B cell (primary cell): ENCODE measurements at regions of chr9 and their contacts with region 1.

Region 1: GRCh38 chr9:128322404-128323211 is at the starts of genes COQ4 and TRUB2:
- DNase-seq: peak; percentile 97
- ATAC-seq: peak; percentile 85
- H3K4me3 ChIP-seq: peak within 1 kb of the TSS; percentile 61 to 95 (median 92)
- H3K4me3 Mint-ChIP-seq: peak within 1 kb of the TSS; percentile 97
- H3K27ac ChIP-seq: peak within 1 kb of the TSS; percentile 75 to 78
- H3K27ac Mint-ChIP-seq: peak within 1 kb of the TSS; percentile 98
- H3K4me1 ChIP-seq: peaks cover 17 to 22% of the 10 kb centered on the region in 2 donors
- H3K4me1 Mint-ChIP-seq: peaks cover 31% of the 10 kb centered on the region
- H3K27me3 ChIP-seq: no peaks in the 10 kb centered on the region
- H3K27me3 Mint-ChIP-seq: no peaks in the 10 kb centered on the region
- CTCF ChIP-seq: no peak
- total RNA-seq, gene COQ4: 54.9 and 57.3 TPM in 2 replicates
- total RNA-seq, gene TRUB2: 21.4 and 21.5 TPM in 2 replicates

Region 2: GRCh38 chr9:128191406-128192046 is 131.1 kb before region 1 on chr9 and contains the start of gene CIZ1:
- CTCF ChIA-PET with region 1: no interaction called
- POLR2A ChIA-PET with region 1: no interaction called
- intact Hi-C with region 1: loop called (anchors 5 kb)
- DNase-seq: peak; percentile 88
- ATAC-seq: peak; percentile 90
- H3K4me3 ChIP-seq: peak within 1 kb of the TSS; percentile 26 to 82 (median 73)
- H3K4me3 Mint-ChIP-seq: peak within 1 kb of the TSS; percentile 94
- H3K27ac ChIP-seq: peak within 1 kb of the TSS; percentile 44 to 76
- H3K27ac Mint-ChIP-seq: peak within 1 kb of the TSS; percentile 92
- H3K4me1 ChIP-seq: peaks cover 12 to 24% of the 10 kb centered on the region in 2 donors
- H3K4me1 Mint-ChIP-seq: peaks cover 29% of the 10 kb centered on the region
- H3K27me3 ChIP-seq: no peaks in the 10 kb centered on the region
- H3K27me3 Mint-ChIP-seq: no peaks in the 10 kb centered on the region
- CTCF ChIP-seq: peak; percentile 84
- total RNA-seq, gene CIZ1: 160 and 169 TPM in 2 replicates

Region 3: DNA sequence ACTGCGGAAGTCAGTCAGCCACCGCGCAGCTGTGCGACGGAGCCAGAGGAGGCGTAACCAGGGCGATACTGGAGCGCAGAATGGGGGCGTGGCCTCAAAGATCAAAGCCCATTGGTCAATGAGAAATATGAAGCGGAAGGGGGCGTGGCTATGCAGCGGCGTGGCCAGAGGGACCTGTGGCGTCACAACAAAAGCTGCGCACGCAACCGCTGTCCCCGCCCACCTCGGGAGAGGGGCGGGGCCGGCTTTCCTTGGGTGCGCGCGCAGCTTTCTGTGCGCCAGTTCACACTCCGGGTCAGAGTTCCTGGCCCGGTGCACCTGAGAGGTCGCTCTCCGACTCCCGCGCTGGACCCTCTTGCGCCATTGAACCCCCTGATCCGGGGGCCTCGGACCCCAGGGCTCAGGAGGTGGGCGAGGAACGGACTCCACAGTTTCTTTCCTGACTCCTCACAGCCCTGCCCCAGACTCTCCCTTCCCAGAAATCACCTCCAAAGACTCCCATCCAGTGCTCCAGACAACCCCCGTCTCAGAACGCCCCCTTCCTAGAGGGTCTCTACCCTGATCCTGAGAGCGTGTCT is 46.5 kb before region 1 on chr9 and contains the starts of genes GOLGA2 and SWI5:
- CTCF ChIA-PET with region 1: no interaction called
- POLR2A ChIA-PET with region 1: interaction called, 4 read pairs
- intact Hi-C with region 1: loop called (anchors 1 kb)
- DNase-seq: peak; percentile 100
- ATAC-seq: peak; percentile 93
- H3K4me3 ChIP-seq: peak within 1 kb of the TSS; percentile 61 to 99 (median 87)
- H3K4me3 Mint-ChIP-seq: peak within 1 kb of the TSS; percentile 96
- H3K27ac ChIP-seq: peak within 1 kb of the TSS; percentile 81 to 92
- H3K27ac Mint-ChIP-seq: peak within 1 kb of the TSS; percentile 97
- H3K4me1 ChIP-seq: peaks cover 14 to 20% of the 10 kb centered on the region in 2 donors
- H3K4me1 Mint-ChIP-seq: peaks cover 23% of the 10 kb centered on the region
- H3K27me3 ChIP-seq: no peaks in the 10 kb centered on the region
- H3K27me3 Mint-ChIP-seq: no peaks in the 10 kb centered on the region
- CTCF ChIP-seq: no peak
- total RNA-seq, gene GOLGA2: 76.3 and 87.3 TPM in 2 replicates
- total RNA-seq, gene SWI5: 8.6 and 13.3 TPM in 2 replicates

Region 4: GRCh38 chr9:128370826-128371621 is 48.4 kb after region 1 on chr9 and contains the start of gene URM1:
- CTCF ChIA-PET with region 1: interaction called, 3 read pairs
- POLR2A ChIA-PET with region 1: interaction called, 3 read pairs
- intact Hi-C with region 1: loop called (anchors 1 kb)
- DNase-seq: peak; percentile 96
- ATAC-seq: peak; percentile 94
- H3K4me3 ChIP-seq: peak within 1 kb of the TSS; percentile 86 to 98 (median 90)
- H3K4me3 Mint-ChIP-seq: peak within 1 kb of the TSS; percentile 95
- H3K27ac ChIP-seq: peak within 1 kb of the TSS; percentile 83 to 96
- H3K27ac Mint-ChIP-seq: peak within 1 kb of the TSS; percentile 96
- H3K4me1 ChIP-seq: peaks cover 15 to 23% of the 10 kb centered on the region in 2 donors
- H3K4me1 Mint-ChIP-seq: peaks cover 30% of the 10 kb centered on the region
- H3K27me3 ChIP-seq: no peaks in the 10 kb centered on the region
- H3K27me3 Mint-ChIP-seq: no peaks in the 10 kb centered on the region
- CTCF ChIP-seq: no peak
- total RNA-seq, gene URM1: 35.6 and 43.8 TPM in 2 replicates

Region 5: GRCh38 chr9:128420060-128420650 is 97.5 kb after region 1 on chr9:
- CTCF ChIA-PET with region 1: no interaction called
- POLR2A ChIA-PET with region 1: no interaction called
- intact Hi-C with region 1: no loop called
- DNase-seq: peak; percentile 87
- ATAC-seq: peak; percentile 86
- H3K4me3 ChIP-seq: peak overlapping the region; percentile 31 to 94 (median 73)
- H3K4me3 Mint-ChIP-seq: peak overlapping the region; percentile 82
- H3K27ac ChIP-seq: peak overlapping the region in 1 of 2 donors; percentile 59
- H3K27ac Mint-ChIP-seq: peak overlapping the region; percentile 20
- H3K4me1 ChIP-seq: peaks cover 20 to 21% of the 10 kb centered on the region in 2 donors
- H3K4me1 Mint-ChIP-seq: peaks cover 7% of the 10 kb centered on the region
- H3K27me3 ChIP-seq: peaks cover 0 to 34% (median 8%) of the 10 kb centered on the region in 4 experiments
- H3K27me3 Mint-ChIP-seq: peaks cover 22% of the 10 kb centered on the region
- CTCF ChIP-seq: peak; percentile 92

Region 6: GRCh38 chr9:128617943-128618342 is 295.3 kb after region 1 on chr9:
- CTCF ChIA-PET with region 1: no interaction called
- POLR2A ChIA-PET with region 1: no interaction called
- intact Hi-C with region 1: no loop called
- DNase-seq: no peak
- ATAC-seq: no peak
- H3K4me3 ChIP-seq: no peak overlapping the region
- H3K4me3 Mint-ChIP-seq: no peak overlapping the region
- H3K27ac ChIP-seq: no peak overlapping the region
- H3K27ac Mint-ChIP-seq: no peak overlapping the region
- H3K4me1 ChIP-seq: no peaks in the 10 kb centered on the region
- H3K4me1 Mint-ChIP-seq: no peaks in the 10 kb centered on the region
- H3K27me3 ChIP-seq: no peaks in the 10 kb centered on the region
- H3K27me3 Mint-ChIP-seq: no peaks in the 10 kb centered on the region
- CTCF ChIP-seq: no peak